GM12878 (cell line): ENCODE measurements at regions of chr7 and their contacts with region 1.

Region 1: DNA sequence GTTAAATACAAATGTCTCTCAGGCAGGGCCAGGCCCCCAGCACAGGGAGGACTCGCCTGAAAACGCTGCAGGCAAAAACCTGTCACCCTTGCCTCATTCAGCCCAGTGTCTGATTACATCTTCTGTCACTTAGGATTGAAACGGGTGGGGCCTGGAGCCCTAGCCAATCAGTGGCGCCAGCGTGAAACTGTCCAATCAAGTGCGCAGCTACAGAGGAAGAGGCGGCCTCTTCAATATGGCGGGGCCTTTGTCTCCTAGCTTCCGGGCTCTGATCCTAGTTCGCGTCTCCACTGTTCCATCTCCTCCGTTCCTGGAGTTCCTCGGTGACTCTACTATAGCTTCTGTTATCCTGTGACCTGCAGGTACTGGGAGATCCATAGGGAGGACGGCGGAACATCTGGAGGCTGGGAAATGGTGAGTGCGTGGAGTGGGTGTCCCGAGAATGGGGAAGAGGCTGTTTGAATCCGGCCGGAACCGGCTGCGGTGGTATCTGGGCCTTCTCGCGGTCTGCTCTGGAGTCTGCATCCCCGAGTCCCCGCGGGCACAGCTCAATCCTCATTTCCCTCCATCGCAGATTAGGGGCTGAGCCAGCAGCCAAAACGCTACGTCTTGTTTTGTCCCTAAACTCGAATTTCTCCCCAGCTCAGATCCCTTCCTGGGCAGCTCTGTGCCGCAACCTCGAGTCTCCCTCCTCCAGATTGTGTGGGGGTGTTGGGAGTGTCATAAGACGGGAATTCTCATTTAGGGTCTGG is at the start of gene ZNF736:
- DNase-seq: peak; percentile 79
- ATAC-seq: peak; percentile 99
- H3K4me3 ChIP-seq: peak within 1 kb of the TSS; percentile 96
- H3K27ac ChIP-seq: peak within 1 kb of the TSS; percentile 96
- H3K4me1 ChIP-seq: no peaks in the 10 kb centered on the region
- H3K27me3 ChIP-seq: no peaks in the 10 kb centered on the region
- CTCF ChIP-seq: no peak
- EP300 ChIP-seq: no peak
- POLR2A ChIP-seq: peak; percentile 93
- RAD21 ChIP-seq: no peak
- polyA plus RNA-seq, gene ZNF736: 1.9 to 3.7 TPM

Region 2: GRCh38 chr7:64494912-64495461 is 181.1 kb after region 1 on chr7:
- CTCF ChIA-PET with region 1: no interaction called
- POLR2A ChIA-PET with region 1: no interaction called
- RAD21 ChIA-PET with region 1: no interaction called
- SMC1A ChIA-PET with region 1: no interaction called
- in situ Hi-C with region 1: no loop called
- intact Hi-C with region 1: no loop called
- DNase-seq: no peak
- ATAC-seq: no peak
- H3K4me3 ChIP-seq: no peak overlapping the region
- H3K27ac ChIP-seq: no peak overlapping the region
- H3K4me1 ChIP-seq: no peaks in the 10 kb centered on the region
- H3K27me3 ChIP-seq: no peaks in the 10 kb centered on the region
- CTCF ChIP-seq: no peak
- EP300 ChIP-seq: no peak
- POLR2A ChIP-seq: no peak
- RAD21 ChIP-seq: no peak

Region 3: GRCh38 chr7:65373608-65374351 is 1059.9 kb after region 1 on chr7 and contains the start of gene ZNF92:
- CTCF ChIA-PET with region 1: no interaction called
- POLR2A ChIA-PET with region 1: no interaction called
- RAD21 ChIA-PET with region 1: no interaction called
- SMC1A ChIA-PET with region 1: no interaction called
- in situ Hi-C with region 1: loop called (anchors 10 kb)
- intact Hi-C with region 1: no loop called
- DNase-seq: peak; percentile 96
- ATAC-seq: peak; percentile 98
- H3K4me3 ChIP-seq: peak within 1 kb of the TSS; percentile 83
- H3K27ac ChIP-seq: peak within 1 kb of the TSS; percentile 66
- H3K4me1 ChIP-seq: no peaks in the 10 kb centered on the region; the same call in 1 of the 2 replicates
- H3K27me3 ChIP-seq: no peaks in the 10 kb centered on the region
- CTCF ChIP-seq: no peak
- EP300 ChIP-seq: no peak
- POLR2A ChIP-seq: peak; percentile 98
- RAD21 ChIP-seq: no peak
- polyA plus RNA-seq, gene ZNF92: 6.7 to 7.2 TPM

Region 4: DNA sequence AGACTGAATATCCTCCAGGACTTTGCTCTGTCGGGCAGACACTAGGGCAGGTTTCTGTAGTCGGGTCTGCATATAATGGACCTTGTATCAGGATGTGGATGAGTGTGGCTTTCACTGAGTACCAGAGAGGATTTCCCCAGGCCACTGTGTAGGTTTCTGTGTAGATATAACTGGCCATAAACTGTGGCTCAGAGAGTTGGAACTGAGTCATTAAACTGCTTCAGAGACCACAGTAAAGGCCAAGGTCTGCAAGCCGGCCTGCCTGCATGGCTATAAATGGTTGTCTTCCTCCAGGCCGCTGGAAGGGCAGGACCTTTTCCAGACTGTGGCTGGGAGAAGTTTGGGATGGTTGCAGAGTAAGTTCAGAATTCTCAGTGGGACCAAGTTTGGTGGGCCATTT is 1076.7 kb after region 1 on chr7:
- CTCF ChIA-PET with region 1: no interaction called
- POLR2A ChIA-PET with region 1: no interaction called
- RAD21 ChIA-PET with region 1: no interaction called
- SMC1A ChIA-PET with region 1: no interaction called
- in situ Hi-C with region 1: no loop called
- intact Hi-C with region 1: loop called (anchors 10 kb)
- DNase-seq: peak; percentile 65
- ATAC-seq: peak; percentile 98
- H3K4me3 ChIP-seq: no peak overlapping the region
- H3K27ac ChIP-seq: peak overlapping the region; percentile 56
- H3K4me1 ChIP-seq: no peaks in the 10 kb centered on the region; the same call in 1 of the 2 replicates
- H3K27me3 ChIP-seq: no peaks in the 10 kb centered on the region
- CTCF ChIP-seq: no peak
- EP300 ChIP-seq: peak in 1 of 2 experiments; percentile 67; a peak in 1 of 4 replicates
- POLR2A ChIP-seq: no peak
- RAD21 ChIP-seq: no peak